Mammary epithelial cell (primary cell): ENCODE measurements at regions of chr13 and their contacts with region 1.

Region 1: GRCh38 chr13:27826379-27827353 is 34.4 kb downstream of the GSX1 start:
- DNase-seq: peak; percentile 75
- H3K4me3 ChIP-seq: peak overlapping the region in 2 of 3 experiments; percentile 32 to 42
- H3K27ac ChIP-seq: no peak overlapping the region
- H3K4me1 ChIP-seq: peaks cover 11% of the 10 kb centered on the region
- H3K27me3 ChIP-seq: peaks cover 10% of the 10 kb centered on the region
- CTCF ChIP-seq: peak; percentile 72 to 91

Region 2: GRCh38 chr13:27362064-27362883 is 464.4 kb before region 1 on chr13:
- CTCF ChIA-PET with region 1: interaction called, 12 read pairs
- dilution Hi-C with region 1: no loop called
- in situ Hi-C with region 1: no loop called
- intact Hi-C with region 1: loop called (anchors 1 kb)
- DNase-seq: peak; percentile 68
- H3K4me3 ChIP-seq: peak overlapping the region; percentile 26 to 42 (median 42)
- H3K27ac ChIP-seq: no peak overlapping the region
- H3K4me1 ChIP-seq: peaks cover 5% of the 10 kb centered on the region
- H3K27me3 ChIP-seq: no peaks in the 10 kb centered on the region
- CTCF ChIP-seq: peak; percentile 91 to 95

Region 3: DNA sequence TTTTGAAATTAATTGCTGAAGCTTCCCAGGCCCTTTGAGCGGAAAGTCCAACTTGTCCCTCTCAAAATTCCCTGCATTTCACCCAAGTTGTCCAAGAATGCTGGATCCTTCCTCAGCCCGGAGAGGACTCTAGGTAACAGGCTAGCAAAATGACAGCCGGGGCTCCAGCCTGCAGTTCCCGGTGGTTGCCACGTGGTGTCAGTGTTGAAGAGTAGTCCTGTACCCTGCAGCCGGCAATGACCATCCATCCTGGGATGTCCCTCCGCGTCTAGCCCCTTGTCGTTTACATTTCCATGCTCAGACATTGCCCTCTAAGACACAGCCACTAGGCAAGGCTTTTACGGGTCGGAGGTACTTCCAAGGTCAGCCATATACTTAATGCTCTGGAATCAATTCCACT is 344.9 kb before region 1 on chr13:
- CTCF ChIA-PET with region 1: interaction called, 3 read pairs
- dilution Hi-C with region 1: no loop called
- in situ Hi-C with region 1: no loop called
- intact Hi-C with region 1: loop called (anchors 1 kb)
- DNase-seq: peak; percentile 41
- H3K4me3 ChIP-seq: no peak overlapping the region
- H3K27ac ChIP-seq: no peak overlapping the region
- H3K4me1 ChIP-seq: no peaks in the 10 kb centered on the region
- H3K27me3 ChIP-seq: peaks cover 3% of the 10 kb centered on the region
- CTCF ChIP-seq: peak; percentile 85 to 88

Region 4: DNA sequence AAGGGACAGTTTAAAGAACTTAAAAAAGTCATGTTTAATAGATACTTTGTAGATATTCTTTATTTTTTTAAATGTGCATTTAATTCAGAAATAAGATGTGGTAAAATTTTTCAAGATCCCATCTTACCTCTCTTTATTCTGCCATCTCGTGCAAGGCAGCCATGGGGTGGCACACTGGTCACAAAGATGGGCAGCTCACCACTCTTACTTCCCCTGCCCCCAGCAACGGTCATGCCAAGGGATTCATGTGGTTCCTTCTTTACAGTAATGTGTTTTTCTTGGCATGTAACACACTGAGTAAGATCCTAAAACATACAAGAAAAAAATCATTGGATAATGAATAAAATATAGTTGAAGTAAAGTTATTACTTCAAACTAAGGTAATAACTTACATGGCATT is 270.6 kb before region 1 on chr13:
- CTCF ChIA-PET with region 1: no interaction called
- dilution Hi-C with region 1: no loop called
- in situ Hi-C with region 1: no loop called
- intact Hi-C with region 1: loop called (anchors 1 kb)
- DNase-seq: peak; percentile 29
- H3K4me3 ChIP-seq: no peak overlapping the region
- H3K27ac ChIP-seq: no peak overlapping the region
- H3K4me1 ChIP-seq: no peaks in the 10 kb centered on the region
- H3K27me3 ChIP-seq: no peaks in the 10 kb centered on the region
- CTCF ChIP-seq: peak in 1 of 2 donors; percentile 22

Region 5: DNA sequence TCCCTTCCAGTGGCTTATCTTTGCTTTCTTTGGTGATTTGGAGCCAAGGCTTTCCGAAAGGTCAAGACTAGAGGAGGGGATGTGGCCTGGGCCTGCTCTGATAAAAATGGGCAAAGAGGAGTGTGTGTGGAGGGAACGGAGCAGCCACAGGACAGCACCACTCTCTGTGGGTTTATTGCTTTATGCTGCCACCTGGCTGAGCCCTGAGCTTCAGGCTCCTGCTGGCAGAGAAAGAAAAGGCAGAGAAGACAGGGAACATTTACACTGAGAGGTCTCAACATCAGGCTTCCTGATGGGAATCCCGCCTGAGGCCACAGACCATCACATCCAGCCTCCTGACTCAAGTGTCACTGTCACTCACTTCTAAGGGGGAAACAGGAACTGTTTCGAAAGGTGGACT is 43.6 kb before region 1 on chr13:
- CTCF ChIA-PET with region 1: no interaction called
- dilution Hi-C with region 1: loop called (anchors 5 kb)
- in situ Hi-C with region 1: loop called in 1 of 2 experiments (anchors 10 kb)
- intact Hi-C with region 1: no loop called
- DNase-seq: no peak
- H3K4me3 ChIP-seq: no peak overlapping the region
- H3K27ac ChIP-seq: no peak overlapping the region
- H3K4me1 ChIP-seq: no peaks in the 10 kb centered on the region
- H3K27me3 ChIP-seq: peaks cover 3% of the 10 kb centered on the region
- CTCF ChIP-seq: peak; percentile 12 to 68

Region 6: GRCh38 chr13:27980280-27980998 is 153.8 kb after region 1 on chr13:
- CTCF ChIA-PET with region 1: interaction called, 8 read pairs
- dilution Hi-C with region 1: no loop called
- in situ Hi-C with region 1: loop called (anchors 5 to 25 kb)
- intact Hi-C with region 1: loop called (anchors 1 kb)
- DNase-seq: no peak
- H3K4me3 ChIP-seq: no peak overlapping the region
- H3K27ac ChIP-seq: no peak overlapping the region
- H3K4me1 ChIP-seq: no peaks in the 10 kb centered on the region
- H3K27me3 ChIP-seq: peaks cover 62% of the 10 kb centered on the region
- CTCF ChIP-seq: no peak